ENCODE measurements at regions of chr22 and their contacts with region 1.

Region 1: GRCh38 chr22:19447388-19448075 is at the start of gene C22orf39:
- DNase-seq: peak; percentile 92 to 93
- H3K4me3 ChIP-seq: peak within 1 kb of the TSS; percentile 59 to 91 (median 72)
- H3K27ac ChIP-seq: peak within 1 kb of the TSS; percentile 89 to 92 (median 91)
- H3K4me1 ChIP-seq: peaks cover 22 to 29% of the 10 kb centered on the region in 2 donors
- H3K27me3 ChIP-seq: no peaks in the 10 kb centered on the region
- CTCF ChIP-seq: no peak
- POLR2A ChIP-seq: peak; percentile 18 to 92
- total RNA-seq, gene C22orf39: 66.9 to 90.0 (median 83.1) TPM

Region 2: DNA sequence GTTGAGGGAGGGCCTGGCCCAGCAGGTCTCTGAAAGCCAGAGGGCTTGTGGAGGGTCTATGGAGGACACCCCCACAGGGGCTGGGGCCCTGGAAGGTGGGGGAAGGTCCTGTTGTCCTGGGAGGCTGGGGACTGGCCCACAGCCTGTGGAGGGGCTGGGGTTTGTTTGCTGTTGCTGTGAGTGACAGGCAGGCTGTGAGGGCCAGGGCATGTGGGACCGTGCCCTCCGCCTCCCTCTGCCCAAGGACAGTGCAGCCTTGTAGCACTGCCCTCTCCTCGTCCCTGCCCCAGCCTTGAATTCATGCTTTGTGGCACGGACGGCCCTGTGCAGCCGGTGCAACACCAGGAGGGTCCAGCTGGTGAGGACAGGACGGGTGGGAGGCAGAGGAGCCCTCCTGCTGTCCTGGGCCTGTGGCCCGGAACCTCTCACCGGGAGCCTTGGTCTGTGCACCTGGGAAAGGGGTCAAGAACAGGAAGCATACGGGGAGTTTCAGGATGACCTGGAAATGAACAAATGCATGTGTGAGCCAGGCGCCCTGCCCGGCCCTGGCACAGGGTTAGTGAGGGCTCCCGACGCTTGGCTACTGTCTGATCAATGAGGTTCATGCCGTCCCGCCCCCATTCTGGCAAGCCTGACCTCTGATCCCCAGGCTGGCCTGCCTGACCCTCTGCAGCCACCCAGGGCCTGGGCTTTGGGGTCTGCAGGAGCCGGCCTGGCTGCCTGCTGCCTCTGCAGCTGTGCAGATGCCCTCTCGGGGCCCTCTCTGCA is 474.1 kb before region 1 on chr22:
- intact Hi-C with region 1: no loop called
- DNase-seq: no peak
- H3K4me3 ChIP-seq: no peak overlapping the region
- H3K27ac ChIP-seq: no peak overlapping the region
- H3K4me1 ChIP-seq: peaks cover 0 to 4% of the 10 kb centered on the region in 2 donors
- H3K27me3 ChIP-seq: no peaks in the 10 kb centered on the region
- CTCF ChIP-seq: no peak
- POLR2A ChIP-seq: no peak

Region 3: DNA sequence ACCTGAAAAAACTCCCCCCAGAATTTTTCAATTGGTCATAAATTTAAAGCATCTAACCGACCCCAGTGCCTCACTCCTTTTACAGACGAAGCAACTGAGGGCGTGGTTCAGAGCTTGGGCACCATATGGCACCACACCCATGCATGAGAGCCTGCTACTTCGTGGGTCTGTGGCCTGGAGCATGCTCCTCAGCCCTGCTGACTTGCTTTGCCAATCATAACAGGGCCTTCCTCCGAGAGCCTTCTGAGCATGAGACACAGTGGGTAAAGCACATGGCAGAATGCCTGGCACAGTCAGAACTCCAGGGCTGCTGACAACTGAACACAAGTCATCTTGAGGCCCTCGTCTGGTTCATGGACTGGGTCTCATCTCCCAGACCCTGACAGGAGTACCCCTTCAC is 49.3 kb before region 1 on chr22:
- intact Hi-C with region 1: loop called (anchors 10 kb)
- DNase-seq: no peak
- H3K4me3 ChIP-seq: no peak overlapping the region
- H3K27ac ChIP-seq: no peak overlapping the region
- H3K4me1 ChIP-seq: no peaks in the 10 kb centered on the region
- H3K27me3 ChIP-seq: no peaks in the 10 kb centered on the region
- CTCF ChIP-seq: no peak
- POLR2A ChIP-seq: no peak

Region 4: GRCh38 chr22:19419464-19420178 is 27.9 kb before region 1 on chr22:
- intact Hi-C with region 1: no loop called
- DNase-seq: no peak
- H3K4me3 ChIP-seq: no peak overlapping the region
- H3K27ac ChIP-seq: peak overlapping the region in 2 of 3 donors; percentile 8 to 49
- H3K4me1 ChIP-seq: peaks cover 68 to 79% of the 10 kb centered on the region in 2 donors
- H3K27me3 ChIP-seq: no peaks in the 10 kb centered on the region
- CTCF ChIP-seq: no peak
- POLR2A ChIP-seq: no peak